ENCODE measurements at regions of chr14 and their contacts with region 1.

Region 1: DNA sequence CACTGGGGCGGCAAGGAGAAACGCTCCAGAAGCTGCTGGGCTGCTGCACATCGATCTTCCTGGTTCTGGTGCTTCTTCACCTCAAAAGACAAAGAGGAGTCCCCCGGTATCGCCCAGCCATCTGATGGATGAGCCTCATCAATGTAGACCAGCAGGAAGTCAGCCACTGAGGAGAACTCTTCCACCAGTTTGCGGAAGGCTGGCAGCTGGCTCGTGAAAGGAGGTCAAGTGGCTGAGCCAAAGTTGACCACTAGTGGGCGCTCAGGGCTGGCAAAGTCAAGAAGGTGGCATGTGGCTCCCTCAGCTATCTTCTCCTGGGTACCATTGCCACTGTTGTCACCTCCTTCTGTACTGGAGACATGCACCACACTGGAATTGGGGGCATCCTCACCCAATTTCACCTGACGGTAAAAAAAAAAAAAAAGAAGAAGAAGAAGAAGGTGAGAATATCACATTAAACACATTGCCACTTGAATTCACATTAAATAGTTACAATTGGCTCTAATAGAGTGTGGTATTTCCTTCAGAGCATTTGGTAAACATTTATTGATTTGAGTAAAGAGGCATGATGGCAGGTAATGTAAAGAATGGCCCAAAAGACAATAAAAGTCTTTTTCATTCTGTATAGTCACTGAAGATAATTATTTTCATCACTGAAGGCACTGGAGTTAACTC is 8.3 kb downstream of the DIO2 start:
- DNase-seq: peak; percentile 51 to 93
- H3K4me3 ChIP-seq: no peak overlapping the region
- H3K27ac ChIP-seq: no peak overlapping the region
- H3K4me1 ChIP-seq: no peaks in the 10 kb centered on the region
- H3K27me3 ChIP-seq: no peaks in the 10 kb centered on the region
- CTCF ChIP-seq: peak; percentile 81 to 97 (median 93)
- EP300 ChIP-seq: no peak
- POLR2A ChIP-seq: no peak
- RAD21 ChIP-seq: peak; percentile 81 to 84

Region 2: DNA sequence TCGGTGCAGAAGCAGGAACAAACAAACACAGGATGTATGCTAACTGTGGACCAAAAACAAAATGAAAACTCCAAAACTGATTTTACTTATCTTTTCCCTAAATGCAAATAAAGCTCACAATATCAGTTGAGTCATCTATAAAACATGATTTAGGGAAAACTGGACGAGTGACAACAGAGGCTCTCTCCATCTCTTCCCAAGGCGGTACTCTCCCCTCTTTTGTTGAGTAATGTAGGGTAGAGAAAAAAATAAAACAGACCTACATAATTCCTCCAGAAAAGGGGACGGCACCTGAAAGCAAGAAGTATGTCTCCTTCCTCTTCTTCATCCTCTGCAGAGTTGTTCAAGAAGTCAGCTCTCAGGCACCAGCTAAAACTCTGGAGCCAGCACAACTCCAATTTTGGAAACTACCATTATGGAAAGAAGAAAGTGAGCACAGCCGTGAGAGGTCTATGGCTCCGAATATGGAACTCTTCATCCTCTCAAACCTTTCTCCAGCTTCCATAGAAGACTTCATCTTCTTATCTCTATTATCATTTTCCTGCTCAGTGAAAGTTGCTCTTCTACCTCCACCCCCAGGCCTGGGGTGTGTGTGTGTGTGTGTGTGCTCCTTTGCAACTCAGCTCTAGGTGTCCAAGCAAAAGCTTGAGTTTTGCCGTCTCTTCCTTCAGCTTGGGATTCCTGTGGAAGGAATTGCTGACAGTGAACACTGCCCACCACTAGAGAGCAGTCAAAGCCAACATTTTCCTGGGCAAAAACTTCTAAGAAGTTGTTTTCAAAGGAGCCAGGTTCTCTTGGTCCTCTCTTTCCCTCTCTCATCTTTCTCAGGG is 147.1 kb before region 1 on chr14:
- CTCF ChIA-PET with region 1: interaction called, 29 read pairs
- POLR2A ChIA-PET with region 1: no interaction called
- DNase-seq: peak; percentile 34 to 58
- H3K4me3 ChIP-seq: no peak overlapping the region
- H3K27ac ChIP-seq: no peak overlapping the region
- H3K4me1 ChIP-seq: no peaks in the 10 kb centered on the region
- H3K27me3 ChIP-seq: no peaks in the 10 kb centered on the region
- CTCF ChIP-seq: peak; percentile 15 to 89 (median 87)
- EP300 ChIP-seq: no peak
- POLR2A ChIP-seq: no peak
- RAD21 ChIP-seq: peak; percentile 94 to 95

Region 3: GRCh38 chr14:80188521-80188920 is 14.5 kb before region 1 on chr14:
- CTCF ChIA-PET with region 1: interaction called, 12 read pairs
- POLR2A ChIA-PET with region 1: interaction called, 4 read pairs
- DNase-seq: no peak
- H3K4me3 ChIP-seq: no peak overlapping the region
- H3K27ac ChIP-seq: no peak overlapping the region
- H3K4me1 ChIP-seq: no peaks in the 10 kb centered on the region
- H3K27me3 ChIP-seq: no peaks in the 10 kb centered on the region
- CTCF ChIP-seq: no peak
- EP300 ChIP-seq: no peak
- POLR2A ChIP-seq: no peak
- RAD21 ChIP-seq: no peak

Region 4: GRCh38 chr14:80213599-80213998 is 10.6 kb after region 1 on chr14:
- CTCF ChIA-PET with region 1: interaction called, 18 read pairs
- POLR2A ChIA-PET with region 1: no interaction called
- DNase-seq: peak; percentile 25 to 53
- H3K4me3 ChIP-seq: no peak overlapping the region
- H3K27ac ChIP-seq: no peak overlapping the region
- H3K4me1 ChIP-seq: no peaks in the 10 kb centered on the region; a peak in 1 of 7 replicates
- H3K27me3 ChIP-seq: no peaks in the 10 kb centered on the region
- CTCF ChIP-seq: peak; percentile 44 to 90 (median 63)
- EP300 ChIP-seq: no peak
- POLR2A ChIP-seq: no peak
- RAD21 ChIP-seq: peak; percentile 91 to 92

Region 5: DNA sequence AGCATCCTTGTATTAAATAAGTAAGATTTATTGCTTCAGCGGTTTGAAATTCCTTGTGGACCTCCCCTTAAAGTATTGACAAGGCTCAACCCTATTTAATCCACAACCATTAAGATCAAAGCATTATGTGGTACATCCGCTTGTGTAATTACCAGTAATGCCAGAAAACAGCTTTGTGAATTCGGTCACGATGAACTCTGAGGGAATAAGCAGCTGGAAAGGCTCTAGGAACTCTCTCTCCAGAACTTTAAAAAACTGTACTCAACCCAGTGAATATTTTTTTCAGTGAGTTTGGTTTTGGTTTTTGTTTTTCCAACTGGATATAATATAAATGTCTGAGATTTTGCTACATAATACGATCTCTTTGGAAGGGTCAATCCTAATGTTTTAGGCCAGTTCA is 57.6 kb after region 1 on chr14:
- CTCF ChIA-PET with region 1: no interaction called
- POLR2A ChIA-PET with region 1: no interaction called
- DNase-seq: no peak
- H3K4me3 ChIP-seq: no peak overlapping the region
- H3K27ac ChIP-seq: no peak overlapping the region
- H3K4me1 ChIP-seq: no peaks in the 10 kb centered on the region
- H3K27me3 ChIP-seq: no peaks in the 10 kb centered on the region
- CTCF ChIP-seq: no peak
- EP300 ChIP-seq: no peak
- POLR2A ChIP-seq: no peak
- RAD21 ChIP-seq: no peak

Region 6: GRCh38 chr14:80356413-80356812 is 153.4 kb after region 1 on chr14:
- CTCF ChIA-PET with region 1: interaction called, 25 read pairs
- POLR2A ChIA-PET with region 1: no interaction called
- DNase-seq: no peak
- H3K4me3 ChIP-seq: no peak overlapping the region
- H3K27ac ChIP-seq: no peak overlapping the region
- H3K4me1 ChIP-seq: no peaks in the 10 kb centered on the region
- H3K27me3 ChIP-seq: peaks cover 0 to 1% (median 0%) of the 10 kb centered on the region in 4 experiments; a peak in 1 of 7 replicates
- CTCF ChIP-seq: peak; percentile 45 to 61 (median 49)
- EP300 ChIP-seq: no peak
- POLR2A ChIP-seq: no peak
- RAD21 ChIP-seq: peak; percentile 67 to 71